ENCODE measurements at regions of chr18 and their contacts with region 1.

Region 1: DNA sequence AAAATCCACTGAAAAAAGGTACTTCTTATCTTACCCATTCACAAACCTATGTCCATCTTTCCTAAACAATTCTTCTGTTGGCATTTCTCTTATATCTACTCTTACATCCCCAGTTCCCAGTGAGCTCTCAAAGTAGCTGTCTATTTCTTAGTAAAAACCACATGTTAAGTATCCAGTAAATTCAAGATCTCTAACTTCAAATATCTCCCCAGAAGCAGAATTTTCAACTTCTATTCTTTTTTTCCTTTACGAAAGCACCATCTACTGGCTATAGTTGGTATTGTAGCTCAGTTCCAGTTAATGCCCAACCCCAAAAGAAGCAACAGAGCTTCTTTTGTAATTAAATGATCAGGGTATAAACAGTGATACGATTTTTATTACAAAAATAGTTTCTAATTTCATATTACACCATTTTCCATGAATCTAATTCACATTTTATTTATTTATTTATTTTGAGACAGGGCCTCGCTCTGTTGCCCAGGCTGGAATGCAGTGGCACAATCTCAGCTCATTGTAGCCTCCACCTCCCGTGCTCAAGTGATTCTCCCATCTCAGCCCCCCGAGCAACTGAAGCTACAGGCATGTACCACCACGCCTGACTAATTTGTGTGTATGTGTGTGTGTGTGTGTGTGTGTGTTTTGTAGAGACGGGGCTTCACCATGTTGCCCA is 28.5 kb downstream of the HRH4 start:
- DNase-seq: no peak
- ATAC-seq: no peak

Region 2: DNA sequence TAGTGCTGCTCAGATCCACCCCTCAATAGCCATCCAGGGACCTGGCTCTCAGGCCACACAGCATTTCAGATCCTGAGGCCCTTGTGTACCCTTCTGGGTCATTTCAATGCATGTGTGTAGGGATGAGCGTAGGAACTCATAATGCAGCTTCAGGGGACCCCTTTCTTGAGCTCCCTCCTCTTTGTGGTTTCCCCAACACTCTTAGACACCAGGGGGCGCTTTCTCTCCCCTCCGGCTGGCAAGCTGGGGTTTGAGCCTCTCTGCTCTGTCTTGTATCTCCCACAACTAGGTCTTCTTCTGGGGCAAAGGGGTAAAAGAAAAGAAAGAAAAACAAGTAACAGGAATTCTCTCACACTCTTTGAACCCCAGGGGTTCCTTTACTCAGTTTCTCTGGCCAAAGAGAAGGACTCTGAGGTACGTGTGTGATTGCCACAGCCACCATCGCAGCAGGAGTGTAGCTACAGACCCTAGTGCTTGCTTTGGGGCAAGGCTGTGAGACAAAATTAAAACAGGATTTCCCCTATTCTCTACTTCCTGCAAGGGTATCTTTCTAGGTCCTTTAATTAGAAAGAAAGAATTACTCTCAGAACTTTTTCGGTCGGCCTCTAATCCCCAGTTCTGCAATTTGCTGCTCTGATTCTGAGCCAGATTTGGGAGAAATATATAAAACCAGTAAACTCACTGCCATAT is 312.1 kb before region 1 on chr18:
- intact Hi-C with region 1: loop called (anchors 5 kb)
- DNase-seq: peak; percentile 71
- ATAC-seq: peak; percentile 69

Region 3: DNA sequence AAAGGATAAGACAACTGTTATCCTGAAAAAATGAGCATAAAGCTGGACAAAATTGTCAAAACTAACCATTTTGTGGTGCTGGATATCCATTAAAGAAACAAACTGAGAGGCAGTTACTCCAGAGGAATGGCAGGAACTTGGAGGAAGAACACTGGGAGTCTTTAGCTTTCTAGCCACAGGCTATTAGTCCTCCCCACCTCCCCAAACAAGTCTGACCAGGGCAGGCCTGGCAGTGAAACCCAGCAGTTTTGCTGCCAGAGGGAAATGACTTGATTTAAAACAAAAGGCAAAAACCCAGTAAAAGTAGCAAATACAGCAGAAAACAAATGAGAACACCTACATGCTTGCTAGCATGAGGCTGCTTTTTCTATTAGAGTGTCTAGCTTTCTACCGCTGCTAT is 126.2 kb before region 1 on chr18:
- intact Hi-C with region 1: loop called (anchors 1 kb)
- DNase-seq: no peak
- ATAC-seq: no peak

Region 4: DNA sequence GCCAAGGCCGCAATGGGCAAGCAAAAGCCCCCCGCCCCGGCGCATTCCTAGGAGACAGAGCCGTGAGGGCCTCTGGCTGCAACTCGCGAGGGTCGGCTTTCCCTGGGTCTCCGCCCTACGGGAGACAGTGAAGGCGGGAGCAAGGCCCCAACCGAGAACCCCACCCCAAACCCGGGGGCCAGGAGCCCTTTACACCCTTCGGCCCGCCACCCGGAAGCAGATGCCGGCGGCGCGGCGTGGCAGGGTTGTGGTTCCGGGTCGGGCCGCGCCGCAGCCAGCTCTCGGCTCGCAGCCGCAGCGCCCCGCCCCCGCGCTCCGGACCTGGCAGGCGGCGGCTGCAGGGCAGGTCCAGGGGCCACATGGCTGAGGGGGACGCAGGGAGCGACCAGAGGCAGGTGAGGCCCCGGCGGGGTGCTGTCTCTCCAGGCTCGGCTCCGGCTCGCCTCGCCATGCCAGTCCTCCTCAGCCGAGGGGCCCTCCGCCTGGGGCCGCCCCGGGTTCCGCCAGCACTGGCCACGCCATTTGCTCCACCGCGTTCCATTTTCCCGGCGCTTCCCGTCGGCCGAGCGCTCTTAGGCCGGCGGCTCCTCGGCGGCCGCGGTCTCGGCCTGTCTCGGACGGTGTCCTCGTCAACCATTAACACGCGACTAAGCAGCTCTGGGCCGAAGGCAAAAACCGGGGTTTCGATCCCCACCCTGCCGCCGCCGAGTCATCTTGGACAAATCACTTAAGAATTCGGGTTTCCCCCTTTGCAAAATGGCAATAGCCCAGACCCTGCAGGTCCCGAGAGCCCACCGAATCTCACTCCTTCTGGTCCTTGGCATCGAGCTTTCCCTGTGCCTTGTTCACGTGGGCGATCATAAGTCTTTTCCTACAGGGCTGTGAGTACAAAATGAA is 62.3 kb before region 1 on chr18 and contains the start of gene IMPACT:
- intact Hi-C with region 1: loop called (anchors 10 kb)
- DNase-seq: peak; percentile 94
- ATAC-seq: peak; percentile 98
- total RNA-seq, gene IMPACT: 19.8 TPM

Region 5: DNA sequence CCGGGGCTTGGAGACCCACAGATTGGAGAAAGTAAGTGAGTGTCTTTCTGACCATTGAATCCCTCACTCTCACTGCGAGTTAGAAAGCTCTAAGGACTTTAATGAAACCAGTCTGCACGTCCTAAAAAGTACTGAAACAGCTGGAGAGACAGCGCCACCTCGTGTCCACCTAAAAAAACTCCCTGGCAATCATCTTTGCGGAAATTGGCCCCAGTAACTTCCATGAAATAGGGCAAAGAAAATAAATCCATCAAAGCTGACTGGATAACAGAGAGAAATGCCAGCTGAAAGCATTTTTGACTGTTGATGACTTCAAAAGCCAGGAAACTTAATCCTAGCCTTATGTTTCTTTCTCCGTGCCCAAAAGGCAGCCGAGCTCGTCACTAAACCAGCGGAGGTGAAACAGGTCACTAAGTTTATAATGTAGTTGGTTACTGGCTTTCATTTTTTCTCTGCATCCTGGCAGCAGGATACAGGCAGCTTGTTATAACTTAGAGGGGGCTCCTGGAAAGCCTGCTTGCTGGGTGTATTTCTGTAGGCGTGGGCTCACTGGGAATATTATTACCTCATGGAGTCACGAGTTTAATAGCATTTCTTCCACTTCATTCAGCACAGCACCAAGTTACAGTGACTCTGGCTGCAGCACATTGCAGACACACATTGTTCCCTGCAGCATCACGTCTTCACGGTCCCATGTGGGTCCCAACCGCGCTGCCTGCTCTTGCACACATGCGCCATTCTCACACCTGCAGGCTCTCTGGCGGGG is 238.0 kb after region 1 on chr18:
- intact Hi-C with region 1: loop called (anchors 5 kb)
- DNase-seq: no peak
- ATAC-seq: peak; percentile 57

Measured in Right ventricle myocardium inferior (tissue), 1 donor.